ENCODE measurements at regions of chr18 and their contacts with region 1.

Region 1: GRCh38 chr18:6543330-6543908 is 128.7 kb upstream of the L3MBTL4 start:
- DNase-seq: no peak
- ATAC-seq: peak; percentile 31; the same call in 1 of the 3 replicates
- H3K4me3 ChIP-seq: no peak overlapping the region
- H3K27ac ChIP-seq: no peak overlapping the region
- H3K4me1 ChIP-seq: no peaks in the 10 kb centered on the region
- H3K27me3 ChIP-seq: no peaks in the 10 kb centered on the region
- CTCF ChIP-seq: peak; percentile 37 to 48 (median 41); a peak in 5 of 6 replicates
- EP300 ChIP-seq: no peak
- POLR2A ChIP-seq: no peak
- RAD21 ChIP-seq: peak; percentile 46

Region 2: GRCh38 chr18:5097116-5097703 is 1446.2 kb before region 1 on chr18:
- CTCF ChIA-PET with region 1: no interaction called
- POLR2A ChIA-PET with region 1: no interaction called
- RAD21 ChIA-PET with region 1: no interaction called
- SMC1A ChIA-PET with region 1: no interaction called
- in situ Hi-C with region 1: loop called (anchors 25 kb)
- intact Hi-C with region 1: no loop called
- DNase-seq: no peak
- ATAC-seq: no peak
- H3K4me3 ChIP-seq: no peak overlapping the region
- H3K27ac ChIP-seq: no peak overlapping the region
- H3K4me1 ChIP-seq: no peaks in the 10 kb centered on the region
- H3K27me3 ChIP-seq: no peaks in the 10 kb centered on the region; a peak in 1 of 4 replicates
- CTCF ChIP-seq: no peak
- EP300 ChIP-seq: no peak
- POLR2A ChIP-seq: no peak
- RAD21 ChIP-seq: no peak

Region 3: DNA sequence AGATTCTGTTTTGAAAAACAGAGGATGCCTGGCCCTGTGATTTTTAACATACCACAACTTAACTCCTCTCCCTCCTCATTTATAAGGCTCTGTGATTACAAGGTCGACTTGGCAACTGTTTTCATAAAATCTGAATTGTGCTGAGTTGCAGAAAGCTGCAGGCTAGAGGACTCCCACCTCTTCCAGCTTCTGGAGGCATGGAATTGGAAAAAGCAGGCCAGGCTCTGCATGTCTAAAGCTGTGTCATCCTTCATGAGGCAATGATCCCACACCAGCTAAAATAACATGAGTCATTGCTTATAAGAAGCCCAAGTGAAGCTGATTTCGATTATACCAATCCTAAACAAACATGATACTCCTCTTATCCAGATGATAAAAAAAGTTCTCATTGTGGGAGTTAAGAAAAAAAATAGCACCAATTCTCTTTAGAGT is 197.8 kb after region 1 on chr18:
- CTCF ChIA-PET with region 1: no interaction called
- POLR2A ChIA-PET with region 1: no interaction called
- RAD21 ChIA-PET with region 1: no interaction called
- SMC1A ChIA-PET with region 1: no interaction called
- in situ Hi-C with region 1: no loop called
- intact Hi-C with region 1: loop called (anchors 10 kb)
- DNase-seq: no peak
- ATAC-seq: no peak
- H3K4me3 ChIP-seq: no peak overlapping the region
- H3K27ac ChIP-seq: no peak overlapping the region
- H3K4me1 ChIP-seq: no peaks in the 10 kb centered on the region
- H3K27me3 ChIP-seq: no peaks in the 10 kb centered on the region
- CTCF ChIP-seq: no peak
- EP300 ChIP-seq: no peak
- POLR2A ChIP-seq: no peak
- RAD21 ChIP-seq: no peak

Region 4: DNA sequence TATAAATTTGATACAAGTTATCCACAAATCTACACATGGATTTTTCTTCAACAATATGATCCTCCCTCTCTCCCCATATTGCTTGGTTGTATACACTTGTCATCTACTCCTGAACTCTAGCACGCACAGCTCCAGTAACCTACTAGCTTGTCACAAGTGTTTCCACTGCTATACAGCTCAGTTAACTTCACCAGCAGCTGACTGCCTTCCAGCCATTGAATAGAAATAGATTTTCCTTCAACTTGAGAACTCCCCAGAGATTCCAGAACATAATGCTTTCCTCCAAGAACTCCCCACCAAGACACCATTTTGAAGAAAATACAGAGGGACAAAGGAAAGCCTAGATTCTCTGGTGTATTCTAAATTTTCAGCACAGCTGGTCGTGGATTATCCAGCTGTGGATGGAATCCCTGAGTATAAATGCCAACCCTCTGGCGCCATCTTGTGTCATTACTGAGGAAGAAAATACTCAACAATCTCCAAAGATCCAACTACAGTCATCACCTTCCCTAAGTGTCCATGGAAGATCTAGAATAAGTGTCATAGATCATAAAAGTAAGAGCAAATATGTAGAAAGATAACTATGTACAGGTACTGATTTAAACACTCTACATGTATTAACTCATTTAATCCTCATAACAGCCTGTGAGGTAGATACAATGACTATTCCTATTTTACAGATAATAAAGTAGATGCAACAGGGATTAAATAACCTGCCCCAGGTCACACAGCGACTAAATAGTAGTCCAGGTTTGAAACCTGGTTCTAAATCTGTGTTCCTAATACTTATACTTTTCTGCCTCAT is 342.8 kb after region 1 on chr18:
- CTCF ChIA-PET with region 1: interaction called, 46 read pairs
- POLR2A ChIA-PET with region 1: no interaction called
- RAD21 ChIA-PET with region 1: interaction called, 15 read pairs
- SMC1A ChIA-PET with region 1: interaction called, 7 read pairs
- in situ Hi-C with region 1: loop called (anchors 10 kb)
- intact Hi-C with region 1: loop called (anchors 1 kb)
- DNase-seq: no peak
- ATAC-seq: peak; percentile 62
- H3K4me3 ChIP-seq: no peak overlapping the region
- H3K27ac ChIP-seq: no peak overlapping the region
- H3K4me1 ChIP-seq: no peaks in the 10 kb centered on the region
- H3K27me3 ChIP-seq: no peaks in the 10 kb centered on the region
- CTCF ChIP-seq: peak; percentile 50 to 62 (median 55)
- EP300 ChIP-seq: no peak
- POLR2A ChIP-seq: no peak
- RAD21 ChIP-seq: peak; percentile 78

Region 5: DNA sequence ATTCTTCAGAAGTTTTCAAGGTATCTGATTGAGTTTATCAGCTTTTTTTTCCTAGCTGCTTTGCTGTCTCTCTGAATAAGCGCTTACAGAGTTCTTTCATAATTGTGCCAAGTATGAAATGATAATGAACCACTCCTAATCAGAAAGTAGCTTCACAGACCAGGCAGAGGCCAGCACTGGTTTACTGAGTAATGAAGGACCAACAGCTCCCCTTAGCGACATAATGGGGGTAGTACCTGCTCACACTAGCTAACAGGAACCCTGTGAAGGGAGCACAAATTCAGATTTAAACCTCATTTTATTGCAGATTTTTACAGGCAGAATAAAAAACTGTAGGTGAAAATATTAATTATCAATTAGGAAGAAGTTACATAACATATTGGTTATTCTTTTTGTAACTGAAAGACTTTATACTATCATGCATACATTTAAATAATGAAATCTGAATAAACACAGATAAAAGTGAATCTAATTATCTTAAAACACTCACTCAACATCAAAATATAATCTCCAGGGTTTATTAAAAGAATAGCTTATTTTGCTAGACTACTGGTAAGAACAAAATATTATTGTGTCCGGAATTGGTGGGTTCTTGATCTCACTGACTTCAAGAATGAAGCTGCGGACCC is 633.8 kb after region 1 on chr18:
- CTCF ChIA-PET with region 1: interaction called, 6 read pairs
- POLR2A ChIA-PET with region 1: no interaction called
- RAD21 ChIA-PET with region 1: no interaction called
- SMC1A ChIA-PET with region 1: interaction called, 4 read pairs
- in situ Hi-C with region 1: no loop called
- intact Hi-C with region 1: loop called (anchors 5 kb)
- DNase-seq: no peak
- ATAC-seq: peak; percentile 78
- H3K4me3 ChIP-seq: no peak overlapping the region
- H3K27ac ChIP-seq: no peak overlapping the region
- H3K4me1 ChIP-seq: no peaks in the 10 kb centered on the region
- H3K27me3 ChIP-seq: no peaks in the 10 kb centered on the region
- CTCF ChIP-seq: peak; percentile 18 to 63 (median 39); a peak in 3 of 6 replicates
- EP300 ChIP-seq: no peak
- POLR2A ChIP-seq: no peak
- RAD21 ChIP-seq: 0 out of 2 replicates have a peak, but pooled peaks have one; percentile 7

Measured in GM12878 (cell line).